Activated CD4-positive, alpha-beta T cell treated with anti-CD3 and anti-CD28 coated beads for 36 hours (primary cell): ENCODE measurements at regions of chr17 and their contacts with region 1.

Region 1: DNA sequence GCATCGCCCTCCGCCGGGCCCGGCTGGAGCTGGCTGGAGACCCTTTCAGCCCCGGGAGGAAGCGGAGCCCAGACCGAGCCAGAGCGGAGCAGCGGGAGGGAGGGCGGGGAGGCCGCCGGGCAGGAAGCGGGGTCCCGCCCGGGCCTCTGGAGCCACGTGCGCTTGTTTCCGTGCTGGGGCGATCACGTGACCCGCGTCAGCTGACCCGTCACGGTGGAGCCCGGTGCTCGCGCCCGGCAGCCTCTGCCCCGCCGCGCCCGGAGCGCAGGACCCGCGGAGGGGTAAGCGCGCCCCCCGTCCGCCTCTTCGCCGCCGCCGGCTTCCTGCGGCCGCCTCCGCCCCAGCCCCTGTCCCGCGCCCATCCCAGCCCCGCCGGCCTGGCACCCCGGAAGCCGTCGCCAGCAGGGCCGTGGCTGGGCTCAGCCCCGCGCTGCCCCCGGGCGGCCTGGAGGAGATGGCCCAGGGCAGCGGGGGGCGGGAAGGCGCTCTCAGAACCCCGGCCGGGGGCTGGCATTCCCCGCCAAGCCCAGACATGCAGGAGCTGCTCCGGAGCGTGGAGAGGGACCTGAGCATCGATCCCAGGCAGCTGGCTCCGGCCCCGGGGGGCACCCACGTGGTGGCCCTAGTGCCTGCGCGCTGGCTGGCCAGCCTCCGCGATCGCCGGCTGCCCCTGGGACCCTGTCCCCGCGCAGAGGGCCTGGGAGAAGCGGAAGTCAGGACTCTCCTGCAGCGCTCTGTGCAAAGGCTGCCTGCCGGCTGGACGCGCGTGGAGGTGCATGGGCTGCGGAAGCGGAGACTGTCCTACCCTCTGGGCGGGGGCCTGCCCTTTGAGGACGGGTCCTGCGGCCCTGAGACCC is at the start of gene WDR81:
- DNase-seq: peak; percentile 95
- ATAC-seq: peak; percentile 82
- H3K4me3 Mint-ChIP-seq: peak within 1 kb of the TSS; percentile 65
- H3K27ac Mint-ChIP-seq: peak within 1 kb of the TSS; percentile 73
- H3K4me1 Mint-ChIP-seq: peaks cover 29% of the 10 kb centered on the region
- H3K27me3 Mint-ChIP-seq: no peaks in the 10 kb centered on the region
- total RNA-seq, gene WDR81: 6.9 to 8.6 TPM

Region 2: DNA sequence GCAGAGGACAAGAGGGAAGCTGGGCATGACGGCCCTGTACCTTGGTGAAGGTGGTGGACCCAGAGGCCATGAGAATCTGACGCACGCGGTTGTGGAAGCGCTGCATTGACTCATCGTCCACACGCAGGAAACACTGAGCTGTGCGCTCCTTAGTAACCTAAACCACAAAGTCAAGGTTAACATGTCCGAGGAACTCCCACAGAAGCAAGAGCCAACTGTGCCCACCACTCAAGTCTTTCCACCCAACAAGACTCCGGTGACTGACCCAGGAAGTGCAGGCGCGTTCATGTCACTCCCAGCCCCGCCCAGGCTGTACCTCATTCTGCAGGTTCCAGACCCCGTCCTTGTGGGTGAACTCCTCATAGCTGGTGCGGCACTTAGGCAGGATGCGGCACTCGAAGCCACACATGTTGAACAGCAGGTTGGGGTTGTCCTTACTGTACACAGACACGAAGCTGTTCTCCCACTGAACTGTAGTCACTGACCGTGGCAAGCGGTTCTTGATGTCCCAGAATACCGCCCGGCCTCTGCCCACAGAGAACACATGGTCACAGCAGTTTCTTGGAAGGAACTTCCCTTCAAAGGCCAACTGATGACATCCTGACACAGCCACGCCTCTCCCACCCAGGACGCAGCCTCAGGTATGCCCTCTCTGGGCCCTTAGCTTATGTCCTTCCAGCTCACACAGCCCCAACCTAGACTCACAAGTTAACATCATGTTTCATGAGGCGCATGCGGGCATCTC is 51.5 kb before region 1 on chr17:
- CTCF ChIA-PET with region 1: interaction called, 13 read pairs
- POLR2A ChIA-PET with region 1: no interaction called
- intact Hi-C with region 1: no loop called
- DNase-seq: peak; percentile 34
- ATAC-seq: peak; percentile 62
- H3K4me3 Mint-ChIP-seq: no peak overlapping the region
- H3K27ac Mint-ChIP-seq: peak overlapping the region; percentile 70
- H3K4me1 Mint-ChIP-seq: peaks cover 11% of the 10 kb centered on the region
- H3K27me3 Mint-ChIP-seq: no peaks in the 10 kb centered on the region

Region 3: GRCh38 chr17:1764284-1764683 is 39.5 kb after region 1 on chr17:
- CTCF ChIA-PET with region 1: interaction called, 9 read pairs
- POLR2A ChIA-PET with region 1: interaction called, 4 read pairs
- intact Hi-C with region 1: loop called in 1 of 2 experiments (anchors 5 kb)
- DNase-seq: peak; percentile 65
- ATAC-seq: peak; percentile 75
- H3K4me3 Mint-ChIP-seq: peak overlapping the region; percentile 5
- H3K27ac Mint-ChIP-seq: peak overlapping the region; percentile 78
- H3K4me1 Mint-ChIP-seq: peaks cover 36% of the 10 kb centered on the region
- H3K27me3 Mint-ChIP-seq: no peaks in the 10 kb centered on the region

Region 4: DNA sequence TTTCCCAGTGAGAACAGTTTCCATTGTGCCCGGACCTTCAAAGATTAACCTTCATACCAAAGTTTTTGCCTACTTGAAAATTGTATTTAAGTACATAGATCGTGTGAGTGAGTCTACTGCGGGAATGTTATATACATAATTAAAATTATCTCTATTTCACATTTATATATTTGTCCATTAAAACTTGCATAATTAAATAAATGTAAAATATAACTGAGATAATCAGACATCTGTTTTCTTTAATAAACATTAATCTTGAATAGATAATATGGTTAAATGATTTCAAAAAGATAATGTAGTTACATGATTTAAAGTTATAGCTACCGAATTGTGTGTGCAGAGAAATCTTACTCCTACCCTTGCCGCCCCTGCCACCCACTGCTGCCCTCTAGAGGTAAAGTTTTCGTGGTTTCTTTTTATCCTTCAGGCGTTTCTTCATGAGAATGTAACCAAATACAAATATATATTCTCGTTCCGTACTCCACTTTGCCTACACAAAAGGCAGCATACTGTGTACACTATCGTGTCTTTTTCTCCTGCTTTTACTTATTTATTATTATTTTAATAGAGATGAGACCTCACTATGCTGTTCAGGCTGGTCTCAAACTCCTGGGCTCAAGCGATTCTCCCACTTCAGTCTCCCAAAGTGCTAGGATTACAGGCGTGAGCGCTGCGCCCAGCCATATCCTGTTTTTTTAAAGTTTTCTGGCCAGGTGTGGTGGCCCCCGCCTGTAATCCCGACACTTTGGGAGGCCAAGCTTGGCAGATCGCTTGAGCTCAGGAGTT is 140.7 kb after region 1 on chr17:
- CTCF ChIA-PET with region 1: interaction called, 6 read pairs
- POLR2A ChIA-PET with region 1: no interaction called
- intact Hi-C with region 1: loop called (anchors 1 to 5 kb)
- DNase-seq: peak; percentile 68
- ATAC-seq: peak; percentile 61
- H3K4me3 Mint-ChIP-seq: no peak overlapping the region
- H3K27ac Mint-ChIP-seq: no peak overlapping the region
- H3K4me1 Mint-ChIP-seq: peaks cover 20% of the 10 kb centered on the region
- H3K27me3 Mint-ChIP-seq: no peaks in the 10 kb centered on the region

Region 5: GRCh38 chr17:2029911-2030778 is 305.4 kb after region 1 on chr17 and contains the start of gene DPH1:
- CTCF ChIA-PET with region 1: interaction called, 5 read pairs
- POLR2A ChIA-PET with region 1: no interaction called
- intact Hi-C with region 1: loop called (anchors 1 to 5 kb)
- DNase-seq: peak; percentile 94
- ATAC-seq: peak; percentile 91
- H3K4me3 Mint-ChIP-seq: peak within 1 kb of the TSS; percentile 88
- H3K27ac Mint-ChIP-seq: peak within 1 kb of the TSS; percentile 78
- H3K4me1 Mint-ChIP-seq: peaks cover 24% of the 10 kb centered on the region
- H3K27me3 Mint-ChIP-seq: peaks cover 20% of the 10 kb centered on the region
- total RNA-seq, gene DPH1: 29.1 to 37.0 TPM